Kidney (tissue), 22 donors: ENCODE measurements at regions of chr5 and their contacts with region 1.

Region 1: DNA sequence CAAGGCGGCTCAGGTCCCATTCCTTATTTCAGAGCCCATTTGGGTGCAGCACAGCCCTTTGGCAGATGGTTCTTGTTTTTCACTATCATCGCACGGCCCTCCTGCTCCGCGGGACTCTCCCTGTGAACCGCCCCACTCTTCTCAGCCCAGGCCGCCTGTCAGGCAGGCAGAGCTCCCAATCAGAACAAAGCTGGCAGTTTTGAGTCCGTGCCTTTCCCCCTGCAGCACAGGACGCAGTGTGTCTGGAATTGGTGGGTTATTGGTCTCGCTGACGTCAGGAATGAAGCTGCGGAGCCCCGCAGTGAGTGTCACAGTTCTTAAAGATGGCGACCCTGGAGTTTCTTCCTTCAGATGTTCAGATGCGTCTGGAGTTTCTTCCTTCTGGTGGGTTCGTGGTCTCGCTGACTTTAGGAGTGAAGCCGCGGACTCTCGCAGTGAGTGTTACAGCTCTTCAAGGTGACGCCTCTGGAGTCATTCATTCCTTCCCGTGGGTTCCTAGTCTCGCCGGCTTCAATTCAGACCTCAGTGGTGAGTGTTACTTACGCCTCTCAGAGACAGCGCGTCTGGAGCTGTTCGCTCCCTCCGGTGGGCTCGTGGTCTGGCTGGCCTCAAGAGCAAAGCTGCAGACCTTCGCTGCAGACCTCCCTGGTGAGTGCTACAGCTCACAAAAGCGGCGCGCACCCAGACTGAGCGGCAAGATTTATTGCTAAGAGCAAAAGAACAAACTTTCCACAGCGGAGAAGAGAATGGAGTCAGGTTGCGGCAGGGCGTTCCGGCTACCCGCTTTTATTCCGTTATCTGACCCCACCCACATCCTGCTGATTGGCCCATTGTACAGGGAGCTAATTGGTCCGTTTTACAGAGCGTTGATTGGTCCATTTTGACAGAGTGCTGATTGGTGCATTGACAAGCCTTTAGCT is 7.5 kb downstream of the ZDHHC11B start:
- DNase-seq: peak; percentile 71 to 89 (median 83)
- H3K4me3 ChIP-seq: peak overlapping the region in 2 of 3 donors; percentile 7 to 17
- H3K27ac ChIP-seq: no peak overlapping the region
- H3K4me1 ChIP-seq: no peaks in the 10 kb centered on the region
- H3K27me3 ChIP-seq: peaks cover 6% of the 10 kb centered on the region
- CTCF ChIP-seq: no peak

Region 2: GRCh38 chr5:683551-684481 is 93.2 kb before region 1 on chr5:
- intact Hi-C with region 1: loop called (anchors 10 kb)
- DNase-seq: peak in 3 of 5 donors; percentile 7 to 83 (median 33)
- H3K4me3 ChIP-seq: no peak overlapping the region
- H3K27ac ChIP-seq: no peak overlapping the region
- H3K4me1 ChIP-seq: no peaks in the 10 kb centered on the region
- H3K27me3 ChIP-seq: no peaks in the 10 kb centered on the region
- CTCF ChIP-seq: no peak